ENCODE measurements at regions of chr3 and their contacts with region 1.

Region 1: DNA sequence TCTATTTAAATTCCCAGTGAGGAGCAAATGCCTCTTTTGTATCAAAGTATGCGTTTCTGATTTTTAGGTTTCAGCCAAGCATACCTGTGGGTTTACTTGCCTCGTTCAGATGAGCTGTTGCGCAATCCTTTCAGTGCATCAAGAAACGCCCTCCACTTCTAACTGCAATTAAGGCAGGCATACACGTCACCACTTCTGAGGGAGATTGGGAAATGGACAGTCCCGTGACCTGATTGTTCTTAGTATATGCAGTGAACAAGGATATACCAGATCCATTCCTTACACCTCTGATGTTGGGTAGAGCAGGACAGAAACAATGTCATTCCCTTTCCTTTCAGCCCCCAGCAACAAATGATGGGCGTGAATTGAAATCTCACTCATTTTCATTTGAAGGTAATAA is 219.0 kb downstream of the ITPR1 start:
- DNase-seq: no peak
- ATAC-seq: peak in 2 of 4 donors; percentile 23 to 24
- H3K4me3 ChIP-seq: no peak overlapping the region
- H3K27ac ChIP-seq: no peak overlapping the region
- H3K4me1 ChIP-seq: peaks cover 0 to 9% (median 4%) of the 10 kb centered on the region in 3 donors
- H3K27me3 ChIP-seq: no peaks in the 10 kb centered on the region
- CTCF ChIP-seq: no peak

Region 2: GRCh38 chr3:4656059-4656458 is 56.1 kb before region 1 on chr3:
- intact Hi-C with region 1: no loop called
- DNase-seq: peak; percentile 26 to 65 (median 54)
- ATAC-seq: peak; percentile 82 to 98 (median 95)
- H3K4me3 ChIP-seq: no peak overlapping the region
- H3K27ac ChIP-seq: no peak overlapping the region
- H3K4me1 ChIP-seq: no peaks in the 10 kb centered on the region
- H3K27me3 ChIP-seq: no peaks in the 10 kb centered on the region
- CTCF ChIP-seq: peak; percentile 37 to 70 (median 52)

Region 3: GRCh38 chr3:4986782-4987537 is 274.8 kb after region 1 on chr3:
- intact Hi-C with region 1: loop called in 1 of 3 experiments (anchors 10 kb)
- DNase-seq: peak; percentile 98 to 99 (median 98)
- ATAC-seq: peak; percentile 78 to 87 (median 84)
- H3K4me3 ChIP-seq: peak overlapping the region in 3 of 4 donors; percentile 1 to 96 (median 28)
- H3K27ac ChIP-seq: peak overlapping the region; percentile 95 to 100 (median 98)
- H3K4me1 ChIP-seq: peaks cover 14 to 55% (median 49%) of the 10 kb centered on the region in 3 donors
- H3K27me3 ChIP-seq: no peaks in the 10 kb centered on the region
- CTCF ChIP-seq: no peak

Region 4: DNA sequence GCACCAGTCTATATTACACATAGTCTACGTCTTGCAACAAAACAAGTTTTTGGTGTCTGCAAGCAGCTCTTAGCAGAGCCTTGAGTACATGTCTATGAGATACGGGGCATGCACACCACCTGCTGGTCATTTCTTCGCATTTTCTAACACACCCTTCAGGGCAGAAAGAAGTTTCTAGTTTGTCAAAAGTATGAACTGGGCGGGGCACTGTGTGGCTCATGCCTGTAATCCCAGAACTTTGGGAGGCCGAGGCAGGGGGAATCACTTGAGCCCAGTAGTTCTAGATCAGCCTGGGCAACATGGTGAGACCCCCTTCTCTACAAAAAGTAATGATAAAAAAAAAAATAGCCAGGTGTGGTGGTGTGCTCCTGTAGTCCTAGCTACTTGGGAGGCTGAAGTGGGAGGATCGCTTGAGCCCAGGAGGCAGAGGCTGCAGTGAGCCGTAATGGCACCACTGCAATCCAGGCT is 345.7 kb after region 1 on chr3:
- intact Hi-C with region 1: loop called (anchors 5 to 10 kb)
- DNase-seq: peak in 5 of 6 donors; percentile 56 to 83 (median 68)
- ATAC-seq: peak; percentile 91 to 97 (median 92)
- H3K4me3 ChIP-seq: no peak overlapping the region
- H3K27ac ChIP-seq: no peak overlapping the region
- H3K4me1 ChIP-seq: no peaks in the 10 kb centered on the region
- H3K27me3 ChIP-seq: no peaks in the 10 kb centered on the region
- CTCF ChIP-seq: peak; percentile 56 to 63 (median 61)